Posterior vena cava (tissue), 2 donors: ENCODE measurements at regions of chr1 and their contacts with region 1.

Region 1: GRCh38 chr1:55284852-55285251 is 69.7 kb upstream of the USP24 start:
- DNase-seq: no peak

Region 2: DNA sequence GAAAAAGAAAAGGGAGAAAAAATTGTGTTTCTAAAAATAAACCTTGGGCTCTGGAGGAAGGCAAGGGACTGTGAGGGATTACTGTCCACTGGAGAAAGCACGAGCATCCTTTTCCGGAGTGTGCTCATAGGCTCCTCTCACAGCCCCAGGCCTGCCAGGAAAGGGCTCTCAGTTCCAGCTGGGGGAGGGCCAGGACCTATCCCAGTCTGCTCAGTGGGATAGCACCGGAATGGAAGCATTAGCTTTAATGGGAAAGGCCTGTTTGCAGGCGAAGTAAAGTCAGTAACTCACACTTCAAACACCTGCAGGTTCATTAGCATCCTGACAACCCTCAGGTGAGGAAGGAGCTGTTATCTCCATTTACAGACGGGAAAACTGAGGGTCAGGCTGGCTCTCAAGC is 44.2 kb after region 1 on chr1:
- intact Hi-C with region 1: no loop called
- DNase-seq: no peak

Region 3: DNA sequence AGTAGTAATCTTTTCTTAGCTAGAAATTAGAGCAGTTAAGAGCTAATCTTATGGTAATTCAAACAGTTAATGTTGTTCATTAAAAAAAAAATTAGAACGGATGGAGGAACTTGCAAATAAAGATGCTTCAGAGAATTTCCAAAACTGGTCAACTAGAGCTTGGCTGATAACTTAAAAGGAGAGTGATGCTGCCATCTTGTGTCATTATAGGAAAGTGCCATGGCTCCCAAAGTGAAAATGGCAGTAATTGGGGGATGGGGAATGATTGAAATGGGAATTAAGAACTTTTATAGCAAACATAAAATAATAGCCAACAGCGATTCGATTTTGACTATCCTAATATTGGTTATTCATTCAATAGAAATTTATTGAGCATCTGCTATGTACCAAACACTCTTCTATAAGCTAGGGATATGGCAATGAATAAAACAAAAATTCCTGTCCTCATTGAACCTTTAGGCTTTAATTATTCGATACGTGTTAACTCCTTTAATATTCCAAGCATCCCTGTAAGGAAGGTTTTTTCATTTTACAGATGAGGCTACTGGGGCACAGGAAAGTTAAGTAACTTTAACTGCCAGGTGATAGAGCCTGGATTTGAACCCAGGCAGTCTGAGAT is 1300.2 kb after region 1 on chr1:
- intact Hi-C with region 1: loop called (anchors 5 kb)
- DNase-seq: no peak

Region 4: DNA sequence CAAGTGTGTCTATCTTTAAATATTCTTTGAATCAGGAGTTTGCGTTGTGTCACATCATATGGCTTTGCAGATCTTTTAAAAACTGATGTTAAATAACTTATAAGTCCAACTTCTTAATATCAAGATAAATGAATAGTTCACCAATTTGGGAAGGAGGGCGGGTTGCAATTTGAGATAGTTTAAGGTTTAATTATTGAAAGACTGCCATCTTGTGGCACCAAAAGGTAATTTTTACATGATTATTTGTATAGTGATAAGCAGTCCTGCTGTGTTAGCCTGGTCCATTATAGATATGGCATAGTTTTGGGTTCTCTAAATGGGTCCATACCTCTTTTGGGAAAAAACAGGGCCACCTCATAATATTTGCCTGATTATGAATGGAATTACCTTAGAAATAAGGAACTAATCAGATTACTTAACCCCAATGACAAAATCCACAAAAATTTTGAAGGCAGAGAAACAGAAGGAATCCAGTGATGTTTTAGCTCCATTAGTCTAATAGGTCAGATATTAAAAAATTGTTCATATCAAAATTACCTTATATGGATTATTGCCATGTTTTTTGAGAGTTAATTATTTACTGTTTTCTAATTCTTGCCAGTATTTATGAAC is 1424.5 kb after region 1 on chr1:
- intact Hi-C with region 1: loop called in 1 of 2 experiments (anchors 10 kb)
- DNase-seq: no peak

Region 5: DNA sequence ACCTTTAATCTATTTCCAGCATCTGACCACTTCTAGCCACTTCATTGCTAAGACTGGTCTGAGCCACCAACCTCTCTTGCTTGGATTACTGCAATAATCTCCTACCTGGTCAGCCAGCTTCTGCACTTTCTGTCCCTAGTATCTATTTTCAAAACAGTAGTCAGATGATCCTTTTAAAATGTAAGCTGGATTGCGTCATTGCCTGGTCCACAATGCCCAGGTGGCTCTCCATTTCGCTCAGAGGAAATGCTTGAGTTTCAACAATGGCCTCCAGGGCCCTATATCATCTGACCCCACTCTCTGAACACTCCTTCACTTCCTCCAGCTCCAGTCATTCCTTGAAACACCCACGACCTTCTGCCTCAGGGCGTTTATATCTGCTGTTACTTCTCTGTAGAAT is 1532.1 kb after region 1 on chr1:
- intact Hi-C with region 1: loop called in 1 of 2 experiments (anchors 10 kb)
- DNase-seq: no peak